ENCODE measurements at regions of chr17 and their contacts with region 1.

Region 1: GRCh38 chr17:76726231-76726775 is at the start of gene JMJD6:
- DNase-seq: peak in 1 of 5 donors; percentile 98
- H3K4me3 ChIP-seq: peak within 1 kb of the TSS; percentile 52 to 95
- H3K4me3 Mint-ChIP-seq: peak within 1 kb of the TSS; percentile 94 to 99 (median 97)
- H3K27ac ChIP-seq: peak within 1 kb of the TSS; percentile 97
- H3K27ac Mint-ChIP-seq: peak within 1 kb of the TSS; percentile 98 to 100 (median 99)
- H3K4me1 ChIP-seq: peaks cover 71% of the 10 kb centered on the region
- H3K4me1 Mint-ChIP-seq: peaks cover 24 to 76% (median 51%) of the 10 kb centered on the region in 4 donors
- H3K27me3 ChIP-seq: no peaks in the 10 kb centered on the region
- H3K27me3 Mint-ChIP-seq: no peaks in the 10 kb centered on the region
- total RNA-seq, gene JMJD6: 59.4 to 62.1 TPM

Region 2: DNA sequence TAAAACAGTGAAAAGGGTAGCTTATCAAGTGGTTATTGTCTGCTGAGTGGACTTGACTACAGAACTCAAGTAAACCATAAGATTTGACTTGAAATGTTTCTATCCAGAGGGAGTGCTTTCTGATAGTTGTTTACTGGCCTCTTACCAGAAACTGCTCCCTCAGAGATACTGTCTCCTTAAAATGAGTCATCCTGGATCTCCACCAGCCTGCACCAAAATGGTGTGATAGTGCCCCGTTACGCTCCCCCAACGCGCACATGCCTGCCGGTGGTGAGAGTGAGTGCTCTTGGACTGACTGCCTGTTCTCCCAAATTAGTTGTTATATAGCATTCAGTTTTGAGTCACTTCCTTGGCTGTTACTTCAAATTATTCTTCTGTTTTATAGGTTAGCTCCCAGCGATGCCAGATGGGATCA is 163.6 kb before region 1 on chr17:
- CTCF ChIA-PET with region 1: no interaction called
- POLR2A ChIA-PET with region 1: interaction called, 19 read pairs
- intact Hi-C with region 1: loop called (anchors 5 kb)
- DNase-seq: no peak
- H3K4me3 ChIP-seq: no peak overlapping the region
- H3K4me3 Mint-ChIP-seq: peak overlapping the region; percentile 43 to 84 (median 56)
- H3K27ac ChIP-seq: peak overlapping the region; percentile 32
- H3K27ac Mint-ChIP-seq: peak overlapping the region; percentile 85 to 100 (median 87)
- H3K4me1 ChIP-seq: peaks cover 50% of the 10 kb centered on the region
- H3K4me1 Mint-ChIP-seq: peaks cover 44 to 86% (median 61%) of the 10 kb centered on the region in 4 donors
- H3K27me3 ChIP-seq: no peaks in the 10 kb centered on the region
- H3K27me3 Mint-ChIP-seq: no peaks in the 10 kb centered on the region

Region 3: DNA sequence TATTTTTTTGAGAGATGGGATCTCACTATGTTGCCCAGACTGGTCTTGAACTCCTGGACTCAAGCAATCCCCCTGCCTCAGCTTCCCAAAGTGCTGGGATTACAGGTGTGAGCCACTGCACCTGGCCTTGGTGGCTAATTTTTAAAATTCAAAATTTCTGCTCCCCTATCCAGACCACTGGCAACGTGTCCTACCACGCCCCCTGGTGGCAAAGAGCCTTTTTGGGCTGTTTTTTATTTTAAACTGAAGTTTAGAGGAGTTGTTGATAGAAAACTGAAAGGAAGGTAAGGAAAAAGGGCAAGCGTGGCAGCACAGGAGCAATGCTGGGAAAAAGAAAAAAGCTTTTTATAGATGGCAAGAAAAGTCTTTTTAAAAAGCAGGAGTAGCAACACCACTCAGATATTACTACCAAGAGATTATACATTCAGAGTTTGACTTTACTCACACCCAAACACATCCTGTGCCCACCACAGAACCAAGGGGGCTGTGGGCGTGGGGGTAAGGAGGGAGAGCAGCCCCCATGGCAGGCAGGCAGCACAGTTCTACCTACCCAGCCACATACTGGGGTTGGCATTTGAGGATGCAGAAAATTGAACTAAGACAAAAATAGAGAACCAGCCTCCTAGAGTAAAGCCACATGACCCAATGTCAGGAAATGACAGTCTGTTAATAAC is 11.3 kb before region 1 on chr17:
- CTCF ChIA-PET with region 1: interaction called, 54 read pairs
- POLR2A ChIA-PET with region 1: interaction called, 50 read pairs
- intact Hi-C with region 1: no loop called
- DNase-seq: peak; percentile 63 to 75 (median 71)
- H3K4me3 ChIP-seq: no peak overlapping the region
- H3K4me3 Mint-ChIP-seq: peak overlapping the region in 5 of 8 donors; percentile 1 to 33 (median 14)
- H3K27ac ChIP-seq: peak overlapping the region; percentile 53
- H3K27ac Mint-ChIP-seq: peak overlapping the region; percentile 72 to 94 (median 87)
- H3K4me1 ChIP-seq: peaks cover 39% of the 10 kb centered on the region
- H3K4me1 Mint-ChIP-seq: peaks cover 24 to 46% (median 35%) of the 10 kb centered on the region in 4 donors
- H3K27me3 ChIP-seq: no peaks in the 10 kb centered on the region
- H3K27me3 Mint-ChIP-seq: no peaks in the 10 kb centered on the region

Region 4: GRCh38 chr17:76753061-76753961 is 27.0 kb after region 1 on chr17:
- CTCF ChIA-PET with region 1: interaction called, 5 read pairs
- POLR2A ChIA-PET with region 1: interaction called, 26 read pairs
- intact Hi-C with region 1: no loop called
- DNase-seq: peak; percentile 65 to 82 (median 73)
- H3K4me3 ChIP-seq: peak overlapping the region; percentile 46 to 62
- H3K4me3 Mint-ChIP-seq: peak overlapping the region; percentile 87 to 93 (median 91)
- H3K27ac ChIP-seq: peak overlapping the region; percentile 69
- H3K27ac Mint-ChIP-seq: peak overlapping the region; percentile 95 to 99 (median 97)
- H3K4me1 ChIP-seq: peaks cover 36% of the 10 kb centered on the region
- H3K4me1 Mint-ChIP-seq: peaks cover 23 to 33% (median 27%) of the 10 kb centered on the region in 4 donors
- H3K27me3 ChIP-seq: no peaks in the 10 kb centered on the region
- H3K27me3 Mint-ChIP-seq: no peaks in the 10 kb centered on the region

Region 5: GRCh38 chr17:76843703-76844484 is 117.6 kb after region 1 on chr17:
- CTCF ChIA-PET with region 1: no interaction called
- POLR2A ChIA-PET with region 1: interaction called, 3 read pairs
- intact Hi-C with region 1: loop called (anchors 1 kb)
- DNase-seq: no peak
- H3K4me3 ChIP-seq: no peak overlapping the region
- H3K4me3 Mint-ChIP-seq: no peak overlapping the region
- H3K27ac ChIP-seq: no peak overlapping the region
- H3K27ac Mint-ChIP-seq: no peak overlapping the region
- H3K4me1 ChIP-seq: peaks cover 26% of the 10 kb centered on the region
- H3K4me1 Mint-ChIP-seq: peaks cover 10 to 19% (median 13%) of the 10 kb centered on the region in 4 donors
- H3K27me3 ChIP-seq: peaks cover 27% of the 10 kb centered on the region
- H3K27me3 Mint-ChIP-seq: peaks cover 31 to 47% of the 10 kb centered on the region in 2 donors